Astrocyte of the cerebellum (primary cell): ENCODE measurements at regions of chr13 and their contacts with region 1.

Region 1: DNA sequence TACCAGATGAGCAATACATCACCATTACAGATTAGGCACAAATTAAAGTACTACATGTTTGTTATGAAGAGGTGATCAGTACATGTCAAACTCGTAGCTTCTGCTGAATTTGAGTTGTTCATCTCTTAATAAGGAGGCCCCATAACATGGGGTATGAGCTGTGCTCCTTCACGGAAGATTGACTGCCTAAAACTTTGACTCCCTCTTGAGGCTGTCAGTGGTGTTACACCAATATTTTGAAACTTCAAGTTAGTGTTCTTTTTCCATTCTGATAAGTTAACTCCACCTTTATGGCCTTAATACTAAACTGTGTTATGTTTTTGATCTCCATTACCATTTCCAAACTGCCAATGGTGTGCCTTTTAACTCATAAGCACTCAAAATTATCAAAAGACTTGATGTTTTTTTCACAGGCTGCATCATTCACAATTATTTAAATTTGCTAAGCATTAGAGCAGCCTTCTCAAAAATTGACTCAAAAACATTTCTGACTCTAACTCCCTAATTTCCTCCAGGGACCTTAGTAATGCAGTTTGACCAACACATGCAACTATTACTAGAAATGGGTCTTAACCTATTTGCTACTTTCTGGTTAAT is 1591.5 kb downstream of the PCDH9 start:
- DNase-seq: peak; percentile 49
- H3K4me3 ChIP-seq: no peak overlapping the region
- CTCF ChIP-seq: peak; percentile 73

Region 2: DNA sequence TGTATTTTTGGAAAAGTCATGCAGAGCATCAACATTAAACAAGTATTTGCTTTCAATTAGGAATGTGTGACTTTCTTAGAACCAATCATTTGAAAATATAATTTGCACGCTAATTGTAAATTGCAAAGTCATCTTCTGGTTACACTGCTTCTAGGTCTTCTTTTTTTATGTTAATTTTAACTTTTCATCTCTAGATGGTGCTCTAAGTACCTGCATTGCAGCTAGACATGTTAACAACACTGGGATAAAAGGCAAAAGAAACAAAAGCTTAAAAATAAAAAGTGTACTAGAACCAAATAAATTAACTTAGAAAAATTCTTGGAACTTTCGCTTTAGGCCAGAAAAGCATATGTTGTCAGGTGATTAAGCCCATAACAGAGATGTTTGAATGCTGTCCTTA is 1166.8 kb before region 1 on chr13:
- in situ Hi-C with region 1: loop called (anchors 25 kb)
- DNase-seq: peak; percentile 22
- H3K4me3 ChIP-seq: no peak overlapping the region
- CTCF ChIP-seq: peak; percentile 31

Region 3: GRCh38 chr13:65540175-65540574 is 98.5 kb before region 1 on chr13:
- in situ Hi-C with region 1: no loop called
- DNase-seq: no peak
- H3K4me3 ChIP-seq: no peak overlapping the region
- CTCF ChIP-seq: no peak